B cell (primary cell): ENCODE measurements at regions of chr7 and their contacts with region 1.

Region 1: GRCh38 chr7:38335492-38336147 is 62.2 kb upstream of the TARP start:
- DNase-seq: peak; percentile 86
- ATAC-seq: peak; percentile 98
- H3K4me3 ChIP-seq: no peak overlapping the region
- H3K4me3 Mint-ChIP-seq: peak overlapping the region; percentile 11
- H3K27ac ChIP-seq: no peak overlapping the region
- H3K27ac Mint-ChIP-seq: peak overlapping the region; percentile 13
- H3K4me1 ChIP-seq: peaks cover 5 to 16% of the 10 kb centered on the region in 2 donors
- H3K4me1 Mint-ChIP-seq: peaks cover 15% of the 10 kb centered on the region
- H3K27me3 ChIP-seq: no peaks in the 10 kb centered on the region
- H3K27me3 Mint-ChIP-seq: no peaks in the 10 kb centered on the region
- CTCF ChIP-seq: peak; percentile 96

Region 2: DNA sequence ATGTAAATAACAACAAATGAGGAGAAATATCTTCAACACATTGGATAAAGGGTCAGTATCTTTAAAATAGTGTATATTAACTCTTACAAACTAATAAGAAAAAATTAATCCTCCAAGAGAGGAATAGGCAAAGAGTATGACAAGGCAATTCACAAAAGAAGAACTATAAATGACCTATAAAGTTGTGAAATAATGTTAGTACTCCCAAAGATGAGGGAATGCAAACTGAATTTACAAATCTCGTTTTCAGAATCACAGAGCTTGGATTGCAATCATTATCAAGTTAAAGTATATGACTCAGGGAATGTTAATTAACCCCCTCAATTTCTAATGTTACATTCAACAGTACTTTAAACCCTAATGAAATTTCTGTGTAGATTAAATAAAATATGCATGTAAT is 25.2 kb after region 1 on chr7:
- CTCF ChIA-PET with region 1: interaction called, 64 read pairs
- POLR2A ChIA-PET with region 1: no interaction called
- intact Hi-C with region 1: no loop called
- DNase-seq: no peak
- ATAC-seq: no peak
- H3K4me3 ChIP-seq: no peak overlapping the region
- H3K4me3 Mint-ChIP-seq: no peak overlapping the region
- H3K27ac ChIP-seq: no peak overlapping the region
- H3K27ac Mint-ChIP-seq: no peak overlapping the region
- H3K4me1 ChIP-seq: peaks cover 23 to 45% of the 10 kb centered on the region in 2 donors
- H3K4me1 Mint-ChIP-seq: peaks cover 41% of the 10 kb centered on the region
- H3K27me3 ChIP-seq: no peaks in the 10 kb centered on the region
- H3K27me3 Mint-ChIP-seq: no peaks in the 10 kb centered on the region
- CTCF ChIP-seq: no peak

Region 3: DNA sequence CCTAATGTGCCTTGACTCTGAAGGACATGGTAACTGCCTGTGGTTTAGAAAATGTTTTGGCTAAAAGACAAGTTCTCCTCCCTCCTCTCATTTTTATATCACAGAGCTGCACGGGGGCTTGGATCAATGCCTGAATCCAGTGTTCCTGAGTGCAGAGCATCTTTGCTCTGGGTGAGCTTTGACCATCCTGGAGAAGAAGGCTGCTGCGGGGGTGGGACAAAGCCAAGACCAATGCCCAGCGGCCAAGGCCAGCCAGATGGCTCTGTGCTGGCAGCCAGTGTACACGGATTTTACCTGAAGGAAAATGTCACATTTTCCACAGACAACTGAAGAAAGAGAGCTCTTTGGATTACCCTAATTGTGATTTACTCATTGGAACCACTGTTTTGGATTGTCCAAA is 39.8 kb after region 1 on chr7:
- CTCF ChIA-PET with region 1: interaction called, 64 read pairs
- POLR2A ChIA-PET with region 1: no interaction called
- intact Hi-C with region 1: no loop called
- DNase-seq: no peak
- ATAC-seq: no peak
- H3K4me3 ChIP-seq: no peak overlapping the region
- H3K4me3 Mint-ChIP-seq: no peak overlapping the region
- H3K27ac ChIP-seq: no peak overlapping the region
- H3K27ac Mint-ChIP-seq: no peak overlapping the region
- H3K4me1 ChIP-seq: no peaks in the 10 kb centered on the region
- H3K4me1 Mint-ChIP-seq: no peaks in the 10 kb centered on the region
- H3K27me3 ChIP-seq: no peaks in the 10 kb centered on the region
- H3K27me3 Mint-ChIP-seq: no peaks in the 10 kb centered on the region
- CTCF ChIP-seq: no peak